Tibial artery (tissue), 4 donors: ENCODE measurements at regions of chr6 and their contacts with region 1.

Region 1: DNA sequence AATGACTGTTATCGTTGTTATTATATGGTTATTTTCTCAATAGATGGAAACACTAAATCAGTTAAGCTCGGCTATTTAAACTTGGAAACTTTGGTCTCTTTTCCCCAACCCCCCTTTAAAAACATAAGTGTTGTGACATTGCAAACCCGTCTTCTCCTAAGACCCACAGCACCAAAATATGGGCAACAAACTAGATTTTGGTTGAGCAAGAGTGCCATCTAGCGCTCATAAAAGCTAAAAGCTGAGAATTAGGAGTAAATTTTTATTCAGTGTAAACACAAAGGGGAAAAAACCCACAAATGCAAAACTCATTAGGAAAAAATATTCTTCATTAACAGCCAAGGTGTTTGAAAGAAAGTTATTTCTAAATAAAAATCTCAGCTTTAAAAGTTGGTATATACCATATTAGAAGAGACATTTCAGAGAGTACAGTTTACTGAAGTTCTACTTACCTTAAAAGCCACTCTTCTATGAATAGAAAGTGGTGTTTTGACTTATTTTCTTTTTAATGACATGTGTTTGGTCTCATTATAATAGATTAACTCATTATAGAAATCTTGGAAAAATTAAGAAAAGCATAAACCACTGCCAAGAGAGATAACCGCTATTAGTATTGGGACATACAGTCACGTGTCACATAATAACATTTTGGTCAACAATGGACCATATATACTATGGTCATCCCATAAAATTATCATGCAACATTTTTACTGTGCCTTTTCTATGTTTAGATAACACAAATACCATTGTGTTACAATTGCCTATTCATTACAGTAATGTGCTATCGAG is 21.1 kb downstream of the SESN1 start:
- DNase-seq: no peak
- H3K4me3 ChIP-seq: no peak overlapping the region
- H3K27ac ChIP-seq: no peak overlapping the region
- H3K4me1 ChIP-seq: peaks cover 0 to 16% (median 4%) of the 10 kb centered on the region in 4 donors
- H3K27me3 ChIP-seq: no peaks in the 10 kb centered on the region
- CTCF ChIP-seq: peak; percentile 63 to 75

Region 2: DNA sequence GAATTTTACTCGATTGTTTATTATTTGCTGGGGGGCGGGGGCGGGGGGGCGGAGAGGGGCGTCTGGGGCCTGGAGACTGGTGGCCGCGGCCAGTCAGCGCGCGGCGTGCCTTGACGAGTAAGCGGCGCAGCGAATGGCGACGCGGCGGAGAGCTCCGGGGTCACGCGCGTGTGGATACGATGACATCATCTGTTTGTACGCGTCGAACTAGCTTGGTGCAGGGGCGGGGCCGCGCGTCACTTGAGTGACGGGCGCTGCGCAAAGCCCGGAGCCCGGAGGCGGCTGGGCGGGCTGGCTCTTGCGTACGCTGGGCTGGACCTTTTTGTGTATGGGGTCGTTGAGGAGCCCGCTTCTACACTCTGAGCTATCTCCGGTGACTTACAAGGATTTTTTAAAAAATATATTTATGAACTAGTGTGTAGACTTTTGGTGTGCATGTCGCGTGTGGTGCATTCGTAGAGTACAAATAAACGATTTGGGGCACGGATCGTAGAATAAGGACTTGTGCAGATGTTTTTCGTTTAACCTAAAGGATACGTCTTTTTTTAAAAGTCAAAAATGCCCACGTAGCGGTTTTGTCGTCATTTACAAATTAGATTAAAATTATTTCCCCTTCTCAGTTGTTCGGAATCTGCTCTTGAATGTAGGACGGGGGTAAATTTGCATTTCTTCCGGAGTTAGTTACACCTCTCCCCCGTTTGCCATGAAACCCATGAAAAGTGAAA is 515.0 kb before region 1 on chr6:
- intact Hi-C with region 1: loop called (anchors 2 kb)
- DNase-seq: peak; percentile 98 to 99
- H3K4me3 ChIP-seq: peak overlapping the region; percentile 86 to 97
- H3K27ac ChIP-seq: peak overlapping the region; percentile 97 to 99
- H3K4me1 ChIP-seq: peaks cover 0 to 31% (median 16%) of the 10 kb centered on the region in 4 donors
- H3K27me3 ChIP-seq: no peaks in the 10 kb centered on the region
- CTCF ChIP-seq: no peak

Region 3: DNA sequence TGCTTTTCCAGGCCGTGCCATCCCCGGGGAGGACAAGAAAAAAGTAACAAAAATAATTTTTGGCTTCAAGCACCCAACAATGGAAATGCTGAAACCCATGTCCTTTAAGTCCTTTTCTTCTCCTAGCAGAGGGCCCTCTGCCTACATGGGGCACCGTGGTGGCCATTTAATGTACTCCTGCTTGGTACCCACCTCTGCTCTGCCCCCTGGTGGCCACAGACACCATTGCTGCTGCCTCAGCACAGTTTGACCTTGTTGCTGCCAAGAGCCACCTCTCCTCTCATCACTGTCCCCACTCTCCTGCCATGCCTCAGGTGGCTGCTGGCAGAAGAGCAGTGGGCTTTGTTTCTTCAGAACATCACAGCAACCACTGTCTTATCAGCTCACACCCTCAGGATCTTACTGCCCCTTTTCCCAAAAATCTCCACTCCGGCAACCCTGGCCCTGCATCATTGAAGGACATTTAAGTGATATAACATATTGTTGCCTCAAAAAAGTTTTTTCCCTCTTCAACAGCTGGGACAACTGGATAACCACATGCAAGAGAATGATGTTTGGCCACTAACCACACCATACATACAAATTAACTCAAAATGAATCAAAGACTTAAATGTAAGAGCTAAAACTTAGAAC is 238.2 kb before region 1 on chr6:
- intact Hi-C with region 1: loop called (anchors 10 kb)
- DNase-seq: peak; percentile 90 to 92
- H3K4me3 ChIP-seq: no peak overlapping the region
- H3K27ac ChIP-seq: peak overlapping the region in 1 of 2 donors; percentile 13
- H3K4me1 ChIP-seq: peaks cover 0 to 18% (median 12%) of the 10 kb centered on the region in 4 donors
- H3K27me3 ChIP-seq: no peaks in the 10 kb centered on the region
- CTCF ChIP-seq: peak; percentile 89 to 97

Region 4: DNA sequence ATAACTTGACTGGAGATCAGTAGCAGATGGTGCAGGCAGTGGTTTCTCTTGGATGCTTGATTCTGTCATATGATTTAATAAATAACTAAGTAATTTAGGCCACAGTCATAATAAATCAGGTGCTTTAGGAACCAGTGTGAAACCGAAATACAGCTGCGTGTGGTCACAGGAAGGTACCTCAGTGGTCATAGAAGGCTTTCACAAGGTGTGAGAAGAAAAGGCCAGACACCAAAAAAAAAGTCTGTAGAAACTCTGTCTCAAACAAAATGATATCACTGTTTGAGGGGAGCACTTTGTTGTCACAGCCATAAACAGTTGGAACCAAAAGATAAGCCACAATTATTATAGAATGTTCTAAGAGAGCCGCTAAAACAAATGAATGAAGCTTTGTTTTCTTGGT is 168.8 kb before region 1 on chr6:
- intact Hi-C with region 1: loop called (anchors 5 kb)
- DNase-seq: no peak
- H3K4me3 ChIP-seq: no peak overlapping the region
- H3K27ac ChIP-seq: no peak overlapping the region
- H3K4me1 ChIP-seq: peaks cover 0 to 4% (median 0%) of the 10 kb centered on the region in 4 donors
- H3K27me3 ChIP-seq: no peaks in the 10 kb centered on the region
- CTCF ChIP-seq: no peak

Region 5: GRCh38 chr6:109024784-109025183 is 48.8 kb before region 1 on chr6:
- intact Hi-C with region 1: loop called (anchors 10 kb)
- DNase-seq: no peak
- H3K4me3 ChIP-seq: no peak overlapping the region
- H3K27ac ChIP-seq: no peak overlapping the region
- H3K4me1 ChIP-seq: peaks cover 0 to 4% (median 3%) of the 10 kb centered on the region in 4 donors
- H3K27me3 ChIP-seq: no peaks in the 10 kb centered on the region
- CTCF ChIP-seq: peak in 1 of 2 experiments; percentile 18

Region 6: GRCh38 chr6:109440331-109441068 is 367.0 kb after region 1 on chr6 and contains the starts of genes PPIL6 and SMPD2:
- intact Hi-C with region 1: no loop called
- DNase-seq: peak; percentile 88 to 94
- H3K4me3 ChIP-seq: peak within 1 kb of the TSS; percentile 85 to 86
- H3K27ac ChIP-seq: peak within 1 kb of the TSS; percentile 81 to 89
- H3K4me1 ChIP-seq: peaks cover 0 to 22% (median 13%) of the 10 kb centered on the region in 4 donors
- H3K27me3 ChIP-seq: no peaks in the 10 kb centered on the region
- CTCF ChIP-seq: peak in 1 of 2 experiments; percentile 23